GM12878 (cell line): ENCODE measurements at regions of chr5 and their contacts with region 1.

Region 1: DNA sequence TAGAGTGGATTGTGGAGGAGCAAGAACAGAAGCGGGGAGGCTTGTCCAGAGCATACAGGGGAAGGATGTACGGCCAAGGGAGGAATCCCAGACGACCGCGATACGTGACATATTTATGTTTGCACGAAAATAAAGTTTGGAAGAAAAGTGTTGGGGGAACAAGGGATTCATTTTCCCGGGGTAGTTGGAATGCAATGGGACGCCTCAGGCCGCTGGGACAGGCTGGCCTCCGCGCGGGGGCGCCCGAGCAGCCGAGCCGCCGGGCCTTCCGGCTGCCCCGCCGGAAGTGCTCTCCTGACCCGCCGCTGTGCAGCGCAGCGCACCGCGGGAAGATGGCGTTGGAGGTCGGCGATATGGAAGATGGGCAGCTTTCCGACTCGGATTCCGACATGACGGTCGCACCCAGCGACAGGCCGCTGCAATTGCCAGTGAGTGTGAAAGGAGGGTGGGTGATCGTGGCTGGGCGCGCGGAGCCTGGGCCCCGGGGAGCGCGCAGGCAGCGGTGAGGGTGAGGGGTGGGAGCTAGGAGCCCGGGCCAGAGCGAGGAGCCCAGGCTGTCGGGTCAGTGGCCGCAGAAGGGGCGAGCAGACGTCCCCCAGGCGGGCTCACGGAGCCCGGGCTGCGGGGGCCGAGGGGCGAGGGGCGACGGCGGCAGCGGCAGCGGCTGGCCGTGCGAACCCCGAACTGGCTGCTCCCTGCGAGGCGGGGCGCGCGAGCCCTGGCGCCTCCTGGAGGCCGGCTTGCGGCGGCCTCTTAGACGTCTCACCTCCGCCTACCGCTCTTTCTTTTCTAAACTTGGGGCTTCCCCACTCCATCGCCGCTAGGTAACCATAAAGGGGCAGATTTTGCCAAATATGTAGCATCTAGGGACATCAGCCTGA is at the start of gene PHAX:
- DNase-seq: peak; percentile 32
- ATAC-seq: peak; percentile 95
- H3K4me3 ChIP-seq: peak within 1 kb of the TSS; percentile 92
- H3K27ac ChIP-seq: peak within 1 kb of the TSS; percentile 69
- H3K4me1 ChIP-seq: no peaks in the 10 kb centered on the region; the same call in 1 of the 2 replicates
- H3K27me3 ChIP-seq: no peaks in the 10 kb centered on the region
- CTCF ChIP-seq: peak; percentile 72 to 89 (median 85)
- EP300 ChIP-seq: no peak
- POLR2A ChIP-seq: peak; percentile 94
- RAD21 ChIP-seq: 0 out of 2 replicates have a peak, but pooled peaks have one; percentile 10
- polyA plus RNA-seq, gene PHAX: 60.8 to 71.5 TPM

Region 2: GRCh38 chr5:126615286-126615685 is 14.4 kb after region 1 on chr5:
- CTCF ChIA-PET with region 1: interaction called, 13 read pairs
- POLR2A ChIA-PET with region 1: no interaction called
- RAD21 ChIA-PET with region 1: no interaction called
- SMC1A ChIA-PET with region 1: no interaction called
- in situ Hi-C with region 1: no loop called
- intact Hi-C with region 1: no loop called
- DNase-seq: peak; percentile 63
- ATAC-seq: peak; percentile 82
- H3K4me3 ChIP-seq: no peak overlapping the region
- H3K27ac ChIP-seq: peak overlapping the region; percentile 44; the same call in 1 of the 2 replicates
- H3K4me1 ChIP-seq: peaks cover 12% of the 10 kb centered on the region
- H3K27me3 ChIP-seq: no peaks in the 10 kb centered on the region
- CTCF ChIP-seq: peak; percentile 25 to 50 (median 42); a peak in 5 of 6 replicates
- EP300 ChIP-seq: peak in 1 of 2 experiments; percentile 16; a peak in 1 of 4 replicates
- POLR2A ChIP-seq: no peak
- RAD21 ChIP-seq: peak; percentile 58